ENCODE measurements at regions of chr11 and their contacts with region 1.

Region 1: DNA sequence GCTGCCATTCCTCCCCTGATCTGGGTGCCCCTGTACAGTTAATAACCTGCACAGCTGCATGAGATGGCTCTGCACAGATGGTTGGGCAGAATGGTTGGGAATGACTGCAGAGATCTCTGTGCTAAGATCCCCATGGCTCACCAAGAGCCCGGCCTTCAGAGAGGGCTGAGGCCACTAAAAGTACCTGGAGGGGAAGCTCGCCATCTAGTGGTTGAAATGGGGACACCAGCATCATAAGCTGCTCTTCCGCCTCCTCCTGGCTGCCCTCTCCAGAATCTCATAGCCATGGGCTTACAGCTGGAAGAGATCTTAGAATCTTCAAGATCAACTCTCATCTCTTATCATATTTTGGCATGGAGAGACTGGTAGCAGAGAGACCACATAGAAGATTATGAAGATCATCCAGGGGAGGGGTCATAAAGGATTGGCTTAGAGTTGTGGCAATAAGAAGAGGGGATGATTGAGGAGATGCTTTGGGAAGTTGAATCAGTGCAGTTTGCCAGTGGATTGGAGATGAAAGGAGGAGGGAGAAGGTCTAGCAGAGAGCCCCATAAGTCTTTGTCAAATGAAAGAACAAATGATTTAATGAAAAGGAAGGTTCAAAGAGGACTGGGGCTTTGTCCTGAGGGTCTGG is 22.0 kb upstream of the TLCD5 start:
- DNase-seq: peak; percentile 62 to 91 (median 85)
- H3K4me3 ChIP-seq: no peak overlapping the region
- H3K27ac ChIP-seq: no peak overlapping the region
- H3K4me1 ChIP-seq: peaks cover 0 to 4% of the 10 kb centered on the region in 2 donors
- H3K27me3 ChIP-seq: no peaks in the 10 kb centered on the region
- CTCF ChIP-seq: peak; percentile 72 to 90 (median 90)
- POLR2A ChIP-seq: no peak

Region 2: DNA sequence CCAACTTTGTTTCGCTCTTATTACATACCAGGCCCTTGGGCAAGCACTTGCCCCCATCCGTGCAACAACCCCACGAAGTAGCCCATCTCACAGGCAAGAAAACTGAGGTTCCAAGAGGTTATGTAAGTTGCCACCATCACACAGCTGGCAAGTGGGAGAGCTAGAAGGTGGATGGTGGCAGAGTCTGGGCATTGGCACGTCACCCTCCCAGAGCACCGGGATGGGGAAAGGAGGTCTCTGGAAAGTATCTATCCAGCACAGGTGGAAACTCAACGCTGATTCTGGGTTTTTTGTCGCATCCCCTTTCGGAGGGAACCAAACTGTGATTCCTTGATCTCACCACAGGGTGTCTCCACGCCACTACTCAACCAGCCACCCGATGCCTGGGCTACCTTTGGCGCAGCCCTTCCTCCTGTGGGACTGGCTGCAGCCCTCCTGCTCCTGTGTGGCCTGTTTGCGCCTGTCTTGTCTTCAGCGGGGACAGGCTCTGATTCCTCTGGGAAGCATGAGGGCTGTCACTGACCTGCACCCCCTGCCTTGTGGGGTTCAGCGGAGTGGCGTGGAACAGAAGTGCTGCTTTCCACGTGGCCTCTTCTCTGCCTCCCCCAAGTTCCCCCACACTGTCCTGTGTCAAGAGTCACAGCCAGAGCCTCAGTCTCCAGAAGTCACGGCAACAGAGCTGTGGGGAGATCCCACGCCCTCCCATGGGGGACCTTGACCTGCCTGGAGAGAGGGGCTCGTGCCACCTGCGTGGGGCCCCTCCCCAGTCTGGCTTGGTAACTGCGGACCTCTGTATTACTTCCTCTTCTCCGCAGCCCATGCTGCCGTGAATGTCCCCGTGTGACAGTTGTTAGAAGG is 130.8 kb before region 1 on chr11:
- intact Hi-C with region 1: loop called (anchors 2 to 5 kb)
- DNase-seq: peak; percentile 70 to 90 (median 85)
- H3K4me3 ChIP-seq: no peak overlapping the region
- H3K27ac ChIP-seq: no peak overlapping the region
- H3K4me1 ChIP-seq: peaks cover 5 to 16% of the 10 kb centered on the region in 2 donors
- H3K27me3 ChIP-seq: no peaks in the 10 kb centered on the region
- CTCF ChIP-seq: peak; percentile 69 to 97 (median 92)
- POLR2A ChIP-seq: no peak

Region 3: DNA sequence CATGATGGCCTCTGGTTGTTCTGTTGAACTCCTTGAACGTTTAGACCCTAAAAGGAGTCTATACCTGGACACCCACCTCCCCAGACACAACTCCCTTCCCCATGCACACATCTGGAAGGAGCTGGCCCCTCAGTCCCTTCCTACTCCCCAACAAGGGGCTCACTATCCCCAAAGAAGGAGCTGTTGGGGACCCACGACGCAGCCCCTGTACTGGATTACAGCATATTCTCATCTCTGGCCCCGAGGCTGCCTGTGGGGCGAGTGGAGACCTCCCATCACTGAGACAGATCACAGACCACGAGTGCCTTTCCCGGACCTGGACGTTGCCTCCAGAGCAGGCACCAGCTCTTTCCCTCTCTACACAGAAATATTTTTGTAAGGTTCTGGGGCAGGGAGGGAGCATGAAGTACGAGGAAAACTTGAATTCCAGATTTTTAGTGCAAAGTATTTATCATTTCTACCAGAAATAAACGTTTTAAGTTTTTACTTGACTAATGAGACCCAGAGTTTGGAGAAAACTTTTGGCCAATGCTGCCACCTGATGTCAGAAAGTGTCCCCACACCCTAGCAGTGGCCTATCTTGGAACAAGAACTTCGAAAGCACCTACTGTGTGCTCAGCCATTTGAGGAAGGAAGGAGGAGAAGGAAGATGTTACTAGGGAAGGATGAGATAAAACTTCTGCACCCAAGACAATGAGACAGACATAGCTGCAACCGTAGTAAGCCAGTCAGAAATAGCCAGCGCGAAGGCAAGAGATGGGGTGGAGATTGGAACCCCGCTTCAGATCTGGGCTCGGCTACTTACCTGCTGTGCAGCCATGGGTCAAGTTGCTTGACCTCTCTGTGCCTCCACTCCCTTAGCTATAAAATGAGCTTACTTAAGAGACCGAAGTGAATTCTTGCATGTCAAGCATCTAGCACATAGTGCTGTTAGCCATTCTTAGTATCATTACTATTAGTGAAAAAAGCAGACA is 73.4 kb before region 1 on chr11:
- intact Hi-C with region 1: loop called (anchors 2 to 5 kb)
- DNase-seq: peak in 2 of 7 donors; percentile 36 to 64
- H3K4me3 ChIP-seq: no peak overlapping the region
- H3K27ac ChIP-seq: no peak overlapping the region
- H3K4me1 ChIP-seq: peaks cover 7 to 11% of the 10 kb centered on the region in 2 donors
- H3K27me3 ChIP-seq: no peaks in the 10 kb centered on the region
- CTCF ChIP-seq: peak; percentile 32 to 76 (median 70)
- POLR2A ChIP-seq: no peak

Region 4: GRCh38 chr11:120235024-120235861 is 67.9 kb before region 1 on chr11:
- intact Hi-C with region 1: loop called (anchors 2 to 5 kb)
- DNase-seq: peak in 5 of 7 donors; percentile 49 to 89 (median 57)
- H3K4me3 ChIP-seq: no peak overlapping the region
- H3K27ac ChIP-seq: no peak overlapping the region
- H3K4me1 ChIP-seq: peaks cover 0 to 4% of the 10 kb centered on the region in 2 donors
- H3K27me3 ChIP-seq: peaks cover 12% of the 10 kb centered on the region
- CTCF ChIP-seq: peak; percentile 40 to 74 (median 63)
- POLR2A ChIP-seq: no peak

Region 5: GRCh38 chr11:120248551-120249278 is 54.4 kb before region 1 on chr11:
- intact Hi-C with region 1: no loop called
- DNase-seq: no peak
- H3K4me3 ChIP-seq: no peak overlapping the region
- H3K27ac ChIP-seq: no peak overlapping the region
- H3K4me1 ChIP-seq: no peaks in the 10 kb centered on the region
- H3K27me3 ChIP-seq: no peaks in the 10 kb centered on the region
- CTCF ChIP-seq: no peak
- POLR2A ChIP-seq: no peak

Region 6: DNA sequence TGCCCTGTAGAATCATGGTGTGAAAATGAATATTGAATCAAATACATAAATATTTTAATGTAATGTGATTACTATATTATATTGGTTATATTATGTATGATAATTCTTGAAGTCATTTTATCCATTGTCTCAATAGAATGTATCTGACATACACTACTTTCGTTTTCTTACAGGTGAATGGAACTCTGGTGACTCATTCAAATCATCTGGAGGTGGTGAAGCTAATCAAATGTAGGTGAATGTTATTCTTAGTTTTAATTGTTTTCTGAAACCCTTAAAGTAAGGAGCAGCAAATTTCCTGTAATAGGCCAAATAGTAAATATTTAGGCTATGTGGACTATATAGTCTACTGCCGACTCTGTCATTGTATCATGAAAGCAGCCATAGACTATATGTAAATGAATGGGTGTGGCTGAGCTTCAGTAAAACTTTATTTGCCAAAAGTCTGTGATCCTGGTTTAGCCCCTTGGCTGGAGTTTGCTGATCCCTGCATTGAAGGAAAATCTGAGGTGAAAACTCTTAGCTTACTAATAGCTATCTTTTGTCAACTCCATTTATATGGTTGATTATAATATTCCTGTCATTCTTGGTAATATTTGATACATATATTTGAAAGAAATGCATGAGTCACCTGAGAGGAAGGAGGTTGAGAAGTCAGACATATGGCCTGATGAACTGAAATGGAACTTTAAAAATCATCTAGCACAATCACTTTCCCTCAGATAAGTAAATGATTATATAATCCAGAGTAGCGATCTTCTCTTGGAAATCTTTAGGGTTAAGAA is 121.3 kb after region 1 on chr11:
- intact Hi-C with region 1: no loop called
- DNase-seq: no peak
- H3K4me3 ChIP-seq: no peak overlapping the region
- H3K27ac ChIP-seq: no peak overlapping the region
- H3K4me1 ChIP-seq: peaks cover 0 to 13% of the 10 kb centered on the region in 2 donors
- H3K27me3 ChIP-seq: no peaks in the 10 kb centered on the region
- CTCF ChIP-seq: no peak
- POLR2A ChIP-seq: no peak

Measured in adrenal gland (tissue), 19 donors.